ENCODE measurements at regions of chr4 and their contacts with region 1.

Region 1: DNA sequence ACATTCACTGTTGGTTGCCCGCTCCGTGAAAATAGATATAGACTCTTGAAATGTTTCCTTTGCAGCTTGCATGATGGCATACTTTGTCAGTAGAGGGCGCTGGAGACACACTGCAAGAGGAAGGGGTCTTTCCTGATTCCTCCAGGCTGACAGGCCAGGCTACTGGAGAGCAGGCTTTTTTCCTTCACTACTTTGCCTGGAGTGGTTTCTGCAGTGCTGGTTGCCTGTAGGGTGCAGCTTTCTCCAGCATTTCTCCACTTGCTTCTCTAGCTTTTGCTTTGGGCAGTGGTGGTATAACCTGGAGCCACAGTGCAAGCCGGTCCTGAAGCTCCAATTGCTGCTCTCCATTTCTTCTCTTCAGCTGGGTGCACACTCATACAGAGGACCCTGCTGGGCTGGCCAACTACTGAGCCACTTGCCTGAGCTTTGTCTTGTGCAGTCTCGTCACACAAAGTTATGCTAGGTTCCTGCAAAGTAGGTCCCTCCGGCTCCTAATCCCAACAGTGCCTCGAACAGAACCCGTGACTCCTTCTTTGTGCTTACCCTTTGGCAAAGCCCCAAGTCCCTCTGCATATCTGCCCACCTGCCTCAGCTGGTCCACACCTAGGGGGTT is 46.3 kb downstream of the RASSF6 start:
- DNase-seq: peak; percentile 51
- ATAC-seq: peak; percentile 91
- H3K4me3 ChIP-seq: no peak overlapping the region
- H3K27ac ChIP-seq: no peak overlapping the region
- H3K4me1 ChIP-seq: no peaks in the 10 kb centered on the region; the same call in 1 of the 2 replicates
- H3K27me3 ChIP-seq: no peaks in the 10 kb centered on the region
- CTCF ChIP-seq: peak; percentile 93 to 96 (median 93)
- EP300 ChIP-seq: no peak
- POLR2A ChIP-seq: no peak
- RAD21 ChIP-seq: peak; percentile 97

Region 2: GRCh38 chr4:73376976-73377375 is 196.9 kb before region 1 on chr4:
- CTCF ChIA-PET with region 1: no interaction called
- POLR2A ChIA-PET with region 1: no interaction called
- RAD21 ChIA-PET with region 1: no interaction called
- SMC1A ChIA-PET with region 1: no interaction called
- in situ Hi-C with region 1: no loop called
- intact Hi-C with region 1: no loop called
- DNase-seq: no peak
- ATAC-seq: no peak
- H3K4me3 ChIP-seq: no peak overlapping the region
- H3K27ac ChIP-seq: no peak overlapping the region
- H3K4me1 ChIP-seq: no peaks in the 10 kb centered on the region
- H3K27me3 ChIP-seq: no peaks in the 10 kb centered on the region
- CTCF ChIP-seq: no peak
- EP300 ChIP-seq: no peak
- POLR2A ChIP-seq: no peak
- RAD21 ChIP-seq: no peak

Region 3: GRCh38 chr4:73446336-73446938 is 127.5 kb before region 1 on chr4:
- CTCF ChIA-PET with region 1: interaction called, 19 read pairs
- POLR2A ChIA-PET with region 1: no interaction called
- RAD21 ChIA-PET with region 1: interaction called, 4 read pairs
- SMC1A ChIA-PET with region 1: interaction called, 3 read pairs
- in situ Hi-C with region 1: no loop called
- intact Hi-C with region 1: no loop called
- DNase-seq: no peak
- ATAC-seq: peak; percentile 97
- H3K4me3 ChIP-seq: no peak overlapping the region
- H3K27ac ChIP-seq: no peak overlapping the region
- H3K4me1 ChIP-seq: no peaks in the 10 kb centered on the region
- H3K27me3 ChIP-seq: no peaks in the 10 kb centered on the region; a peak in 1 of 4 replicates
- CTCF ChIP-seq: peak; percentile 74 to 86 (median 85)
- EP300 ChIP-seq: no peak
- POLR2A ChIP-seq: no peak
- RAD21 ChIP-seq: peak; percentile 70

Region 4: GRCh38 chr4:73620115-73620792 is 46.4 kb after region 1 on chr4 and contains the start of gene RASSF6:
- CTCF ChIA-PET with region 1: interaction called, 8 read pairs
- POLR2A ChIA-PET with region 1: interaction called, 3 read pairs
- RAD21 ChIA-PET with region 1: interaction called, 8 read pairs
- SMC1A ChIA-PET with region 1: interaction called, 12 read pairs
- in situ Hi-C with region 1: no loop called
- intact Hi-C with region 1: no loop called
- DNase-seq: no peak
- ATAC-seq: peak; percentile 91
- H3K4me3 ChIP-seq: peak within 1 kb of the TSS; percentile 61
- H3K27ac ChIP-seq: no peak within 1 kb of the TSS
- H3K4me1 ChIP-seq: no peaks in the 10 kb centered on the region
- H3K27me3 ChIP-seq: no peaks in the 10 kb centered on the region
- CTCF ChIP-seq: no peak
- EP300 ChIP-seq: no peak
- POLR2A ChIP-seq: no peak
- RAD21 ChIP-seq: no peak
- polyA plus RNA-seq, gene RASSF6: 0.35 to 0.40 TPM

Region 5: DNA sequence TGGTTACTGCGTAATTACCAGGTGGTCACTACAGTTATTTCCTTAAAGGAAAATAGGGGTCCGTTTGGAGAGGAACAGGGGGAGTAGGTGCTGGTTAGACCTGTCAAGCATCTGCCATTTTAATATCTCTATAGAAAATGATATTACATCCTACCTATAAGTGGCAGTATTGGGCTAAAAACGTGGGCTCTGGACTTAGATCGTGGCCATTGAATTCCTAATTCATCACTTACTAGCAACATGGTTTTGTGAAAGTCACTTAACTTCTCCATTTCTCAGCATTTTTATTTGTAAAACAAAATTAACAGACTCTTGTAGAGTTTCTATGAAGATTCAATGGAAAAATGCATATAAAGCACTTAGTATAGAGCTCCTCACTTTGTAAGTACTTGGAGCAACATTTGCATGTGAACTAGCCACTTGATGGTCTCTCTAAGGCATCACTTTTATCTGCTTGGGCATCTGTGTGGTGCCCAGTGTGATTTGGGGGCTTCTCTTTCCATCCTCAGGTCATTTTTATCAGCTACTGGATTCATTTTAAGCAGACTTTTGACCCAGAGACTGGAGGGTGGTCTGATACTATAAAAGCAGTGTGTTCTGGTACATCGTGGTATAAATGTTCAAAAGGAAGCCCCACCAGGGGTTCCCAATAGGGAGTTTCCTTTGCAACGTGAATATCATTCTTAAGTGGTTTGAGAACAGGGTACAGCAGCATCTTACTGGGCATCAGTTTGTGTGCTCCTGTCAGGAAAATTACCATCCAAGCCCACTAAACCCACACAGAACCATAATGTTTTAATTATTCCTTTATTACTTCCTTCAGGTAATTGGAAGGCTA is 89.0 kb after region 1 on chr4:
- CTCF ChIA-PET with region 1: interaction called, 120 read pairs
- POLR2A ChIA-PET with region 1: no interaction called
- RAD21 ChIA-PET with region 1: interaction called, 311 read pairs
- SMC1A ChIA-PET with region 1: interaction called, 302 read pairs
- in situ Hi-C with region 1: loop called (anchors 5 kb)
- intact Hi-C with region 1: no loop called
- DNase-seq: no peak
- ATAC-seq: peak; percentile 91
- H3K4me3 ChIP-seq: no peak overlapping the region
- H3K27ac ChIP-seq: no peak overlapping the region
- H3K4me1 ChIP-seq: no peaks in the 10 kb centered on the region
- H3K27me3 ChIP-seq: no peaks in the 10 kb centered on the region; a peak in 1 of 4 replicates
- CTCF ChIP-seq: peak; percentile 27 to 66 (median 48); a peak in 5 of 6 replicates
- EP300 ChIP-seq: no peak
- POLR2A ChIP-seq: no peak
- RAD21 ChIP-seq: peak; percentile 55

Region 6: DNA sequence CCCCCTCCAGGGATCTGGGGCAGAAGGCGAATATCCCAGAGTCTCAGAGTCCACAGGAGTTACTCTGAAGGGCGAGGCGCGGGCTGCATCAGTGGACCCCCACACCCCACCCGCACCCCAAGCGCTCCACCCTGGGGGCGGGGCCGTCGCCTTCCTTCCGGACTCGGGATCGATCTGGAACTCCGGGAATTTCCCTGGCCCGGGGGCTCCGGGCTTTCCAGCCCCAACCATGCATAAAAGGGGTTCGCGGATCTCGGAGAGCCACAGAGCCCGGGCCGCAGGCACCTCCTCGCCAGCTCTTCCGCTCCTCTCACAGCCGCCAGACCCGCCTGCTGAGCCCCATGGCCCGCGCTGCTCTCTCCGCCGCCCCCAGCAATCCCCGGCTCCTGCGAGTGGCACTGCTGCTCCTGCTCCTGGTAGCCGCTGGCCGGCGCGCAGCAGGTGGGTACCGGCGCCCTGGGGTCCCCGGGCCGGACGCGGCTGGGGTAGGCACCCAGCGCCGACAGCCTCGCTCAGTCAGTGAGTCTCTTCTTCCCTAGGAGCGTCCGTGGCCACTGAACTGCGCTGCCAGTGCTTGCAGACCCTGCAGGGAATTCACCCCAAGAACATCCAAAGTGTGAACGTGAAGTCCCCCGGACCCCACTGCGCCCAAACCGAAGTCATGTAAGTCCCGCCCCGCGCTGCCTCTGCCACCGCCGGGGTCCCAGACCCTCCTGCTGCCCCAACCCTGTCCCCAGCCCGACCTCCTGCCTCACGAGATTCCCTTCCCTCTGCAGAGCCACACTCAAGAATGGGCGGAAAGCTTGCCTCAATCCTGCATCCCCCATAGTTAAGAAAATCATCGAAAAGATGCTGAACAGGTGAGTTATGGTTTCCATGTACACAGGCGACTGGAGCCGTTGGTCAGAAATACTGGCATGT is 295.5 kb after region 1 on chr4 and contains the start of gene CXCL1:
- CTCF ChIA-PET with region 1: interaction called, 5 read pairs
- POLR2A ChIA-PET with region 1: no interaction called
- RAD21 ChIA-PET with region 1: no interaction called
- SMC1A ChIA-PET with region 1: interaction called, 4 read pairs
- in situ Hi-C with region 1: no loop called
- intact Hi-C with region 1: loop called (anchors 10 kb)
- DNase-seq: no peak
- ATAC-seq: no peak; the same call in 2 of the 3 replicates
- H3K4me3 ChIP-seq: no peak within 1 kb of the TSS
- H3K27ac ChIP-seq: no peak within 1 kb of the TSS
- H3K4me1 ChIP-seq: no peaks in the 10 kb centered on the region
- H3K27me3 ChIP-seq: peaks cover 2 to 8% of the 10 kb centered on the region in 2 experiments; a peak in 2 of 4 replicates
- CTCF ChIP-seq: no peak
- EP300 ChIP-seq: no peak
- POLR2A ChIP-seq: no peak
- RAD21 ChIP-seq: no peak
- polyA plus RNA-seq, gene CXCL1: not detected

Region 7: DNA sequence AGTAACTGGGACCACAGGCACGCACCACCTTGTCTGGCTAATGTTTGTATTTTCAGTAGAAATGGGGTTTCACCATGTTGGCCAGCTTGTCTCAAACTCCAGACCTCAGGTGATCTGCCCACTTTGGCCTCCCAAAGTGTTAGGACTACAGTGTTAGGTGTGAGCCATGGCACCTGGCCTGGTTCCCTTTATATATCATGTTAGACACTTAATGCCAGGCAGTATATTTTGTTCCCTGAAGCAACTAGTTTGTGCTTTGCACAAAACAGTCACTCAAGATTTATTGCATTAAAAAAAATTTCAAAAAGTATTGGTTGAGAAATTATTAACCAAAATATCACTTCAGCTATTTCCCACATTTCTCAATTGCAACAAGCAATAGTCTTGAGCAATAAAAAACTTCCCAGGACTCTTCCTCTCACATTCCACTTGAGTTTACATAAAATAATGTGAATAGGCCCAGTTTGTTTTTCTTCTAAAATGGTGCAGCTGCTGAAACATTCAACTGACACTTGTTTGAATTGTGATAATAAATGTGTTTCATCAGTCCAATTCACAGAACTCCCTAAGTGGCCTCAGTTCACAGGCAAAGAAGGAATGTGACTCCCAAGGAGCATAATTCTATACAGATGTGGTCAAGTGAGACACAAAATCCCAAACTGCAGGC is 318.0 kb after region 1 on chr4:
- CTCF ChIA-PET with region 1: no interaction called
- POLR2A ChIA-PET with region 1: no interaction called
- RAD21 ChIA-PET with region 1: no interaction called
- SMC1A ChIA-PET with region 1: no interaction called
- in situ Hi-C with region 1: no loop called
- intact Hi-C with region 1: no loop called
- DNase-seq: no peak
- ATAC-seq: no peak
- H3K4me3 ChIP-seq: no peak overlapping the region
- H3K27ac ChIP-seq: no peak overlapping the region
- H3K4me1 ChIP-seq: no peaks in the 10 kb centered on the region
- H3K27me3 ChIP-seq: no peaks in the 10 kb centered on the region; a peak in 1 of 4 replicates
- CTCF ChIP-seq: no peak
- EP300 ChIP-seq: no peak
- POLR2A ChIP-seq: no peak
- RAD21 ChIP-seq: no peak

Region 8: GRCh38 chr4:73904491-73904890 is 330.6 kb after region 1 on chr4:
- CTCF ChIA-PET with region 1: no interaction called
- POLR2A ChIA-PET with region 1: no interaction called
- RAD21 ChIA-PET with region 1: no interaction called
- SMC1A ChIA-PET with region 1: no interaction called
- in situ Hi-C with region 1: no loop called
- intact Hi-C with region 1: no loop called
- DNase-seq: no peak
- ATAC-seq: no peak
- H3K4me3 ChIP-seq: no peak overlapping the region
- H3K27ac ChIP-seq: no peak overlapping the region
- H3K4me1 ChIP-seq: no peaks in the 10 kb centered on the region
- H3K27me3 ChIP-seq: no peaks in the 10 kb centered on the region
- CTCF ChIP-seq: no peak
- EP300 ChIP-seq: no peak
- POLR2A ChIP-seq: no peak
- RAD21 ChIP-seq: no peak

Measured in GM12878 (cell line).